Colonic mucosa (tissue), 4 donors: ENCODE measurements at regions of chr5 and their contacts with region 1.

Region 1: DNA sequence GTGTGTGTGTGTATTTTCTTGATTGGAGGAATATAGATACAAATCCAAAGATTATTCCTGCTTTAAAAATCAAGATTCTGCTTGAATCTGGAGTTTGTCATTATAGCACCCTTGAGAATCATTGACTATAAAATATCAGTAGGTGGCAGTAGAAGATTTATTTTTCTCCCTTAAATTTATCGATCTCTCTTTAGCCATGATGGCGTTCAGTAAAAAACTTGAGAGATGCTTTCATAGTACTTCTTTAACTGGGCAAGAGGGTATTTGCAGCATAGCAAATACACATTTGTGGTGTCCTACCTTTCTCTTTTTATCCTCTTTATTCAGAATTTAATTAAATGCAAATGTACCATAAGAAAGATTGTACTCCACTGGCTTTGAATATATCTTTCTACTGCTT is 307.7 kb downstream of the ADGRV1 start:
- DNase-seq: no peak
- H3K4me3 ChIP-seq: no peak overlapping the region
- H3K27ac ChIP-seq: no peak overlapping the region
- H3K4me1 ChIP-seq: no peaks in the 10 kb centered on the region
- H3K27me3 ChIP-seq: no peaks in the 10 kb centered on the region
- CTCF ChIP-seq: peak; percentile 38

Region 2: GRCh38 chr5:90740244-90740799 is 126.0 kb before region 1 on chr5:
- intact Hi-C with region 1: no loop called
- DNase-seq: no peak
- H3K4me3 ChIP-seq: no peak overlapping the region
- H3K27ac ChIP-seq: no peak overlapping the region
- H3K4me1 ChIP-seq: no peaks in the 10 kb centered on the region
- H3K27me3 ChIP-seq: no peaks in the 10 kb centered on the region
- CTCF ChIP-seq: no peak

Region 3: GRCh38 chr5:90830058-90830457 is 36.3 kb before region 1 on chr5:
- intact Hi-C with region 1: no loop called
- DNase-seq: peak; percentile 46
- H3K4me3 ChIP-seq: no peak overlapping the region
- H3K27ac ChIP-seq: no peak overlapping the region
- H3K4me1 ChIP-seq: no peaks in the 10 kb centered on the region
- H3K27me3 ChIP-seq: no peaks in the 10 kb centered on the region
- CTCF ChIP-seq: no peak

Region 4: DNA sequence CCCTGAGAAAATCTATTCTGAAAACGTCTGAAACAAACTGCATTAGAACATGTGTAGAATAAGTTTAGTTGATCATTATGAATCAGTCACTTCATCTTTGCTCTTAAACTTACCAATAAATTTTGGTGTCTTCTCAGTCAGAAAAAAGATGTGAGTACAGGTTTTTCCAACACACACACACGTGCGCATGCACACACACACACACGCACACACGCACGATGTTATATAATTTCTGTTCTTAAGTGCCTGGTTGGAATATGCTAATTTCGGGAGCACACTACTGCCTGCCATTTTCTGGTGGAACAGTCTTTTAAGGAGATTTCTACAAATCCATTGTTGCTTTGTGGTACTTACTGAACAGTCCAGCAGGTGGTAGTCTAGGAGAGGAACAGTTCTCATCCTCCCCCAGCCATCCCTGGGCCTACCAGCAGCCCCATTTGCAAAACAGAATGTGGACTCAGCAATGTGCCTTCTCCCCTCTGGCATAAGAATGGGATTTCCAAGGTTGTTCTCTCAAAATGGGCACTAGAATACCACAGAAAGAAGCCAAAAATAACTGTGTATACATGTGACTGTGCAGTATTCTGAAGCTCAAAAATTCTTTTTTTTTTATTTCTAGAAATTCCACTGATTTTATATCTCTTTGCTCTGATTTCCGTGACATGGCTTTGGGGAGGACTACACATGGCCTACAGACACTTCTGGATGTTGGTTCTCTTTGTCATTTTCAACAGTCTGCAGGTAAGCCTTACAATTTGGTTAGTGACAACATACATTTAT is 235.5 kb after region 1 on chr5:
- intact Hi-C with region 1: loop called (anchors 5 kb)
- DNase-seq: peak; percentile 80
- H3K4me3 ChIP-seq: no peak overlapping the region
- H3K27ac ChIP-seq: no peak overlapping the region
- H3K4me1 ChIP-seq: peaks cover 3% of the 10 kb centered on the region
- H3K27me3 ChIP-seq: no peaks in the 10 kb centered on the region
- CTCF ChIP-seq: peak; percentile 60

Region 5: GRCh38 chr5:91419571-91420537 is 553.5 kb after region 1 on chr5:
- intact Hi-C with region 1: loop called (anchors 5 kb)
- DNase-seq: peak; percentile 74
- H3K4me3 ChIP-seq: no peak overlapping the region
- H3K27ac ChIP-seq: no peak overlapping the region
- H3K4me1 ChIP-seq: no peaks in the 10 kb centered on the region
- H3K27me3 ChIP-seq: no peaks in the 10 kb centered on the region
- CTCF ChIP-seq: peak; percentile 79